ENCODE measurements at regions of chr2 and their contacts with region 1.

Region 1: DNA sequence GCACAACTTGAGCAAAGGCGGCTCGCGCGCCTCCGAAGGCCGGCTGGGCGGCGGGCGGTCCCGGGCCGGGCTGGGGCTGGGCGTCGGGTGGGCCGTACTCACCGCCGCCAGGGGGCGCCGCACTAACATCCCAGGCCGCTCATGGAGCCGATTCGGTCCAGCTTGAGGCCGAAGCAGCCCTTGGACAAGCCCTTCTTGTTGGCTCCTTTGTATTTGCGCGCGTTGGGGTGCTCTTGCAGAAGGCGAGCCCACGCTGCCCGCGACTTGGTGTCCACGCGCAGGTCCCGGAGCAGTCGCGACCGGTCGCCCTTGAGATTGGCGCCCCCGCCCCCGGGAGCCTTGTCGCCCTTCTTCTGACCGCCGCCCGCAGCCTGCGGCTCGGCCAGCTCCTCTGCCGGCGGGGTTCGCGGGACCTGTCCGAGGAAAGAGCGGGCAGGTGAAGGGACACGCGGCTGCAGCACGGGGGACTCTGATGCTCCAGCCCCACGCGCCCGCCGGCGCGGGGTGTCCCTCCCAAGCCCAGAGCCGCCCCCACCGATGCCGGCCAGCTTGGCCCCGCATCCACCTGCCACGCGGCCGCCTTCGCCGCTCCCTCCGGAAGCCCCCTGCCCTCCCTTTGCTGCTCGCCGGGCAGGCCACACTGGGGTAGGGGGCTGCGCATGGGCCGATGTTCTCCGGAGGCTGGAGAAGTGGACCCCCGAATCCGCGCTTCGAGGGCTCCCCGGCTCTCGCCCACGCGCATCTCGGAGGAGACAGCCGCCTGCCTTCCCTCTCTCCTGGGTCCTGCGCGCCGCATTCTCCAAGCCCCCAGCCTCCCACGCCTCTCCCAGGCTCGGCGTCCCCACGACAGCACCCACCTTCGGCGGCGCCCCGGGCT is 655 bp downstream of the NPPC start:
- DNase-seq: peak; percentile 82 to 93 (median 89)
- H3K4me3 ChIP-seq: peak overlapping the region; percentile 24
- H3K27ac ChIP-seq: no peak overlapping the region
- H3K4me1 ChIP-seq: peaks cover 6% of the 10 kb centered on the region
- H3K27me3 ChIP-seq: no peaks in the 10 kb centered on the region
- CTCF ChIP-seq: peak; percentile 80 to 91 (median 86)
- EP300 ChIP-seq: no peak
- POLR2A ChIP-seq: no peak

Region 2: DNA sequence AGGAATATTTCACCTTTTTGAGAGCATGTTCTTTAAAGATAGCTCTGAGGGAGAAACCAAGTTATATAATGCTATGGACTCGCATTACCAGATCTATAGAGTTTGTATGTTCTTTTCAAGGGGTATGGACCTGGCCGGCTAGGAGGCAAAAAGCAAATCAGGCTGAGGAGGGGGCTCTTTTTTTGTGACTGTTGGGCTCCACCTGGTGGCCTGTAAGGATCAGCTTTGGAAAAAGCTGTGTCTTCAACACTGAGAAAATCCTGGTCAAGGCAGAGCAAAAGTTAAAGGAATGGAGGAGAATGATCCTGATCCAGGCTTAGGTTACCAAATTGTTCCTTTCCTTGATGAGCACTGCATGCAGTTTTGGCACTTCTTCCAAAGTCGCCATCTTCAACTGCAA is 216.5 kb after region 1 on chr2:
- intact Hi-C with region 1: loop called in 3 of 4 experiments (anchors 5 kb)
- DNase-seq: peak in 4 of 5 donors; percentile 34 to 44 (median 38)
- H3K4me3 ChIP-seq: no peak overlapping the region
- H3K27ac ChIP-seq: no peak overlapping the region
- H3K4me1 ChIP-seq: no peaks in the 10 kb centered on the region
- H3K27me3 ChIP-seq: no peaks in the 10 kb centered on the region
- CTCF ChIP-seq: peak; percentile 19 to 57 (median 37)
- EP300 ChIP-seq: no peak
- POLR2A ChIP-seq: no peak

Region 3: GRCh38 chr2:232438951-232439757 is 513.6 kb after region 1 on chr2:
- intact Hi-C with region 1: loop called in 1 of 4 experiments (anchors 5 kb)
- DNase-seq: peak in 2 of 5 donors; percentile 41 to 57
- H3K4me3 ChIP-seq: no peak overlapping the region
- H3K27ac ChIP-seq: no peak overlapping the region
- H3K4me1 ChIP-seq: peaks cover 3% of the 10 kb centered on the region
- H3K27me3 ChIP-seq: no peaks in the 10 kb centered on the region
- CTCF ChIP-seq: peak in 2 of 3 donors; percentile 25 to 50
- EP300 ChIP-seq: no peak
- POLR2A ChIP-seq: no peak

Region 4: GRCh38 chr2:232521959-232522622 is 596.5 kb after region 1 on chr2:
- intact Hi-C with region 1: loop called (anchors 5 to 10 kb)
- DNase-seq: peak; percentile 39 to 81 (median 77)
- H3K4me3 ChIP-seq: peak overlapping the region; percentile 21
- H3K27ac ChIP-seq: no peak overlapping the region
- H3K4me1 ChIP-seq: no peaks in the 10 kb centered on the region
- H3K27me3 ChIP-seq: no peaks in the 10 kb centered on the region
- CTCF ChIP-seq: peak; percentile 91 to 97 (median 94)
- EP300 ChIP-seq: no peak
- POLR2A ChIP-seq: no peak

Measured in ovary (tissue), 10 donors.